Naive thymus-derived CD4-positive, alpha-beta T cell (primary cell): ENCODE measurements at regions of chr3 and their contacts with region 1.

Region 1: DNA sequence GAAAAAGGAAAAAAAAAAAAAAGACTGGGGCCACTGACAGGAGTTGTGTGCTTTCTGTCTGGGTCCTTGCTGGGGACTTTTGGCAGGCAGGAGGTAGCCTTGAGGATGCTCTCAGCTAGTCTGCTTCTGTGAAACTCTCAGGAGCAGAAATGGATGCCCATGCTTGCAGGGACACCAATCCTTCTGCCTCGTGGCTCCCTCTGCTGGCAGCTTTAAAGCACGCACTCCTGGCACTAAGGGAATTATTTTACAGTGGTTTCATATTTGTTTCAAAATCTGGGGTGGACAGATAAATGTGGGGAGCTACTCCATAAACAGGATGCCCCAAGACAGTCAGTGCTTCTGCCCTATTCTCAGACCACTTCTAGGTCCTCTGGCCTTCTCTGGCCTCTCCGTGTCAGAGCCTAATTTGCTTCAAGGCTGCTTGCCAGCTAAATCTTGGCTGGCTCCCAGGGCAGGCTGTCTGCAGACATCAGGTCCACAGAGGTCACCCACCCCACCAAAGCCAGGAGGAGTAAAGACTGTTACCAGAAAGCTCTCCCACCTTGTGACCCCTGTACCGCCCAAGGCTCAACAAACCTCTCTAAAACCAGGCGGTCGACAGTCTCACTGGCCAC is 17.1 kb downstream of the TRAIP start:
- DNase-seq: peak; percentile 64 to 84 (median 75)
- ATAC-seq: peak; percentile 97
- H3K4me3 ChIP-seq: no peak overlapping the region
- H3K4me3 Mint-ChIP-seq: no peak overlapping the region
- H3K27ac ChIP-seq: no peak overlapping the region
- H3K27ac Mint-ChIP-seq: peak overlapping the region in 1 of 9 donors; percentile 3
- H3K4me1 ChIP-seq: no peaks in the 10 kb centered on the region
- H3K4me1 Mint-ChIP-seq: peaks cover 0 to 9% (median 0%) of the 10 kb centered on the region in 7 donors
- H3K27me3 ChIP-seq: no peaks in the 10 kb centered on the region
- H3K27me3 Mint-ChIP-seq: no peaks in the 10 kb centered on the region

Region 2: GRCh38 chr3:49703443-49703927 is 135.8 kb before region 1 on chr3:
- CTCF ChIA-PET with region 1: interaction called, 5 read pairs
- POLR2A ChIA-PET with region 1: no interaction called
- intact Hi-C with region 1: loop called in 1 of 2 experiments (anchors 1 kb)
- DNase-seq: peak; percentile 44 to 74 (median 65)
- ATAC-seq: peak; percentile 94
- H3K4me3 ChIP-seq: no peak overlapping the region
- H3K4me3 Mint-ChIP-seq: no peak overlapping the region
- H3K27ac ChIP-seq: no peak overlapping the region
- H3K27ac Mint-ChIP-seq: peak overlapping the region in 2 of 9 donors; percentile 8 to 52
- H3K4me1 ChIP-seq: no peaks in the 10 kb centered on the region
- H3K4me1 Mint-ChIP-seq: peaks cover 0 to 7% (median 0%) of the 10 kb centered on the region in 7 donors
- H3K27me3 ChIP-seq: no peaks in the 10 kb centered on the region
- H3K27me3 Mint-ChIP-seq: no peaks in the 10 kb centered on the region

Region 3: DNA sequence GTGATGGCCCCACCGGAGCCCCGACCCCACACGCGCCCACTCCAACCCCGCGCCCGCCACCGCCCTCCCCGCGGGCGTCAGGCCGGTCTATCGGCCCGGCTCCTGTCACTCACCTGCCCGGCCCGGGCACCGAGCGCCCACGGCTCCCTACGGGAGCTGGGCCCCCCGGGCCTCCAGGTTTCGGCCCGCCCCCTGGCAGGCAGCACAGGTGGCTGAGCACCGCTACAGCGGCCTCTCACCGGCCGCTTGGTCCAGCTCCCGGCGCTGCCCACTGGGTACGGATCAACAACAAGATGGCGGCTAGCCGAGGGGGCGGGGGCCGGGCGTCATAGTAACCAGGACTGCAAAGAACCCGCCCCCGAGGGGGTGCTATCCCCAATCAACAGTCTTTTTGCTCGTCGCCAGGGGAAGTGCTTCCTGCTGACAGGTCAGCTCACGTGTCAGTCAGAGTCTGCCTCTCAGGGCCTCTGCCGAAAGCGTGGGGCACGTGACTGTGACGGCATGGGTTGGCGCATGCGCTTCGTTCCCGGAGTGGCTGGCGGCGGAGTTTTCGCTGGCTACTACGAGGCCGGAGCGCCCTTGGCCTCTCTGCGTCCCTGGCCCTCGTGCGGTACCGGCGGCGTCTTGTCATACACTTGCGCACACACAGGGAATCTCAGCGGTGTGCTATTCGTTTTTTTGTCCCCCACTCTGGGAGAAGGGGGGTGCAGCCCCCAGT is 52.9 kb before region 1 on chr3 and contains the start of gene IP6K1:
- CTCF ChIA-PET with region 1: interaction called, 5 read pairs
- POLR2A ChIA-PET with region 1: no interaction called
- intact Hi-C with region 1: loop called in 1 of 2 experiments (anchors 5 kb)
- DNase-seq: peak; percentile 90 to 100 (median 99)
- ATAC-seq: peak; percentile 99
- H3K4me3 ChIP-seq: peak within 1 kb of the TSS; percentile 80
- H3K4me3 Mint-ChIP-seq: peak within 1 kb of the TSS; percentile 91 to 99 (median 94)
- H3K27ac ChIP-seq: peak within 1 kb of the TSS; percentile 95
- H3K27ac Mint-ChIP-seq: peak within 1 kb of the TSS; percentile 96 to 100 (median 99)
- H3K4me1 ChIP-seq: peaks cover 9 to 12% of the 10 kb centered on the region in 2 donors
- H3K4me1 Mint-ChIP-seq: peaks cover 15 to 50% (median 32%) of the 10 kb centered on the region in 7 donors
- H3K27me3 ChIP-seq: no peaks in the 10 kb centered on the region
- H3K27me3 Mint-ChIP-seq: peaks cover 0 to 6% (median 0%) of the 10 kb centered on the region in 5 donors
- total RNA-seq, gene IP6K1: 41.8 to 57.0 (median 47.3) TPM

Region 4: DNA sequence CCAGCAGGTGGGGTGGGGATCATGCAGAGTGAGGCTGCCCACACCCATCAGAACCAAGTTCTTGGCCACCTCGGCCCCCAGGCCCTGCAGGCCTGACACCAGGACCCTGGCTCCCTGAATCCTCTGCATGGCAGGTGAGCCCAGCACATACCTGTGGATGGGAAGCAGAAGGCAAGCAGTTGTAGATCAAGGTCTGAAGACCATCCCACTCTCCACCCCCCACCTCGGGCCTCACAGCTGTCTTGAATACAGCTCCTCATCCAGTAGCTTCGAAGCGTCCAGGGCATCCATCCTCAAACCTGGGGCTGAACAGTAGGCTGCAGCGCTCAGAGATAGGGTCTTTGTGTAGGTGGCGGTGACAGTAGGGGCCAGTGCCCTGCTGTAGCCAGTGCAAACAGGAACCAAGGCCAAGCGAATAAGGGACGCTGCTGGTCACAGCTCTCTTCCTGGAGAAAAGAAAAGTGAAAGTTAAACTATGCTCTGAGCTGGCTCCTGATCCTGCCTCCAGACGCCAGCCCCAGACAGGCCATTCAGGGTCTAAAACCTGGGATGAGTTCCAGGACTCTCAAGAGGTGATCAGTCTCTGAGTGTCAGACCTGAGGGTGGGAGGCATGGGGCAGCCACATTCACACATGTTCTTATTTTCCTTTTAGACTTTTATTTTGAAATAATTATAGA is 25.7 kb before region 1 on chr3 and contains the start of gene UBA7:
- CTCF ChIA-PET with region 1: interaction called, 181 read pairs
- POLR2A ChIA-PET with region 1: interaction called, 5 read pairs
- intact Hi-C with region 1: no loop called
- DNase-seq: peak in 8 of 9 donors; percentile 26 to 54 (median 48)
- ATAC-seq: peak; percentile 91
- H3K4me3 ChIP-seq: peak within 1 kb of the TSS; percentile 90
- H3K4me3 Mint-ChIP-seq: peak within 1 kb of the TSS; percentile 93 to 99 (median 97)
- H3K27ac ChIP-seq: peak within 1 kb of the TSS; percentile 86
- H3K27ac Mint-ChIP-seq: peak within 1 kb of the TSS; percentile 95 to 100 (median 98)
- H3K4me1 ChIP-seq: peaks cover 12 to 18% of the 10 kb centered on the region in 2 donors
- H3K4me1 Mint-ChIP-seq: peaks cover 20 to 45% (median 43%) of the 10 kb centered on the region in 7 donors
- H3K27me3 ChIP-seq: no peaks in the 10 kb centered on the region
- H3K27me3 Mint-ChIP-seq: no peaks in the 10 kb centered on the region
- total RNA-seq, gene UBA7: 273 to 318 (median 287) TPM

Region 5: GRCh38 chr3:49906004-49906743 is 66.9 kb after region 1 on chr3:
- CTCF ChIA-PET with region 1: interaction called, 5 read pairs
- POLR2A ChIA-PET with region 1: no interaction called
- intact Hi-C with region 1: loop called in 1 of 2 experiments (anchors 1 kb)
- DNase-seq: peak; percentile 16 to 60 (median 39)
- ATAC-seq: peak; percentile 53
- H3K4me3 ChIP-seq: no peak overlapping the region
- H3K4me3 Mint-ChIP-seq: peak overlapping the region; percentile 39 to 79 (median 64)
- H3K27ac ChIP-seq: peak overlapping the region; percentile 24
- H3K27ac Mint-ChIP-seq: peak overlapping the region; percentile 63 to 91 (median 87)
- H3K4me1 ChIP-seq: peaks cover 15 to 26% of the 10 kb centered on the region in 2 donors
- H3K4me1 Mint-ChIP-seq: peaks cover 18 to 41% (median 27%) of the 10 kb centered on the region in 7 donors
- H3K27me3 ChIP-seq: no peaks in the 10 kb centered on the region
- H3K27me3 Mint-ChIP-seq: no peaks in the 10 kb centered on the region

Region 6: DNA sequence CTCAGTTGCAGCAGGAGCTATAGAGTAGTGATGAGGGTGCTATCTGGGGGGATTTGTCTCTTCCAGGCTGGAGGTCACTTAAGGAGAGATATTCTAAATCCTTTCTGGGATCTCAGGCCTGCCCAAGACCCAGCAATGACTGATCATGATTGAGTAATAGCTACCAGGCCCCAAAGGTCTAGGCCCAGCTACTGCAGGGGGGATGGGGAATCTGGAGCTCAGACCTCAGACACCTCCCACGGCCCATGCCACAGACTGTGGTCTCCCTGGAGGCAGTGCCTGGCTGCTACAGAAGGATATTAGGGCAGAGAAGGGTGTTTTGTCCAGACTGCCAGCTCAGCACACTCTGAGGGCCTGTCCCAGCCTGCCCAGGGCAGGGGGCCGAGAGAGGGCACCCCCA is 372.6 kb after region 1 on chr3:
- CTCF ChIA-PET with region 1: no interaction called
- POLR2A ChIA-PET with region 1: no interaction called
- intact Hi-C with region 1: no loop called
- DNase-seq: peak in 1 of 9 donors; percentile 45
- ATAC-seq: no peak
- H3K4me3 ChIP-seq: no peak overlapping the region
- H3K4me3 Mint-ChIP-seq: no peak overlapping the region
- H3K27ac ChIP-seq: no peak overlapping the region
- H3K27ac Mint-ChIP-seq: peak overlapping the region in 1 of 9 donors; percentile 51
- H3K4me1 ChIP-seq: no peaks in the 10 kb centered on the region
- H3K4me1 Mint-ChIP-seq: no peaks in the 10 kb centered on the region
- H3K27me3 ChIP-seq: no peaks in the 10 kb centered on the region
- H3K27me3 Mint-ChIP-seq: peaks cover 2 to 19% (median 14%) of the 10 kb centered on the region in 5 donors